Activated CD8-positive, alpha-beta memory T cell treated with anti-CD3 and anti-CD28 coated beads, Interleukin-2, amount 10 ng/mL, durations not matched to agents 7 days and 5 days (primary cell): ENCODE measurements at regions of chr2 and their contacts with region 1.

Region 1: DNA sequence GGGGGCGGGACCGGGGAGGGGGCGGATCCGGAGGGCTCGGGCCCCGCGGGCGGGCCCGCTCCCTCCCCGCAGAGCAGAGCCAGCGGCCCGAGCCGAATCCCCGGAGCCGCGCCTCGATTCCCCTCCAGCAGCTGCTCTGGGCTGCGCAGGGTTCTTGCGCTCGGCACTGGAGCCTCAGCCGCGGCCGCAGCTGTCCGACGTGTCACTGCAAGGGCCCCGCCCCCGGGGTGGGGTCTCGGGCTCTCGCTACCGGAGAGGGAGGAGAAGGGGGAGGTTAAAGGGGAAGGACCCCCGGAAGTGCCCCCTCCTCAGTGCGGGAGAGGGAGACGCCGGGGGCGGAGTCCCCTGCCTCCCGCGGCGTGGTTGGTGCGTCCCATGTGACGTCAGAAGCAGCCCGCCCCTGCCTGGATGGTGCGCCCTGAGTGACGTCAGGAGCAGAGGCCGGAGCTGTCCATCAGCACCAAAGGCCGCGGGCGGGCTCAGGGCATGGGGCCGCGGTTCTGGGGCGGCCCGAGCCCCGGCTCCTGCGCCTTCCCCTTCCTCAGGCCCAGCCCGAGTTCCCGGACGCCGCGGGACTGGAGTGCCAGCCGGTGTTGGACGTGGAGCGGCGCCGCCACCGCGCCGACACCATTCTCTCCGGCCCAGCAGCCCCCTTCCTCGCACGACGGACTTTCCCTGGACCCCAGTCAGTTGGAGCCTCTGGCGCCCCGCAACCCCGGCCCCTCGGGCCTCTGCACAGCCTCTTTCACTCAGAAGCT is at the starts of genes CHPF and TMEM198:
- DNase-seq: peak; percentile 97
- ATAC-seq: peak; percentile 76
- H3K4me3 Mint-ChIP-seq: peak within 1 kb of the TSS; percentile 84
- H3K27ac Mint-ChIP-seq: peak within 1 kb of the TSS; percentile 81
- H3K4me1 Mint-ChIP-seq: peaks cover 20% of the 10 kb centered on the region
- H3K27me3 Mint-ChIP-seq: peaks cover 17% of the 10 kb centered on the region
- total RNA-seq, gene CHPF: 14.2 to 24.4 TPM
- total RNA-seq, gene TMEM198: 1.8 to 2.8 TPM

Region 2: DNA sequence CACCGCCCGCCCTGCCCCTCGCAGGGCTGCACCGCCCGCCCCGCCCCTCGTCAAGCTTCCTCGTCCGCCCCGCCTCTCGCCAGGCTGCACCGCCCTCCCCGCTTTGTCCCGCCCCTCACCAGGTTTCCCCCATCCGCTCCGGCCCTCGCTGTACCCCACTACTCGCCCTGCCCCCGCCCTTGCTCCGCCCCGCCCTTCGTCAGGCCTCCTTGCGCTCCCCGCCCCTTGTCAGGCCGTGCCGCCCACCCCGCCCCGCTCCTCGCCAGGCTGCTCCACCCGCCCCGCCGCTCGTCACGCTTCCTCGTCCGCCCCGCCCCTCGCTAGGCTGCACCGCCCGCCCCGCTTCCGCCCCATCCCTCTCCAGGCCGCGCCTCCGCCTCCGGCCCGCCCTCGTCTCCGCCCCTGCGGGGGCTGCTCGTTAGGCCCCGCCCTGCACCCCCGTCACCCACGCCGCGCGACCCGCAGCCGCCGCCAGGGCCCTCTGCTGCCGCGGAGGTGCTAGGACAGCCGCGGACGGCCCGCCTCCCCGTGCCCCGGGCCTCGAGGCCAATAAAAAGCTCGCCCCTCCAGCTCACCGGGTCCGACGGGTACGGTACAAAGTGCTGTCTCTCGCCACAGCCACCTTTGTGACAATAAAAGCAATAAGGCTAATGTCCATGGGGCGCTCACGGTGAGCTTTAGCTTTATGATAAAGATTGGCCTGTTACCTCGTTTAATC is 155.5 kb before region 1 on chr2:
- CTCF ChIA-PET with region 1: interaction called, 16 read pairs
- DNase-seq: peak; percentile 98
- ATAC-seq: peak; percentile 77
- H3K4me3 Mint-ChIP-seq: peak overlapping the region; percentile 88
- H3K27ac Mint-ChIP-seq: peak overlapping the region; percentile 73
- H3K4me1 Mint-ChIP-seq: peaks cover 13% of the 10 kb centered on the region
- H3K27me3 Mint-ChIP-seq: peaks cover 4% of the 10 kb centered on the region

Region 3: GRCh38 chr2:219486380-219486959 is 57.3 kb before region 1 on chr2:
- CTCF ChIA-PET with region 1: no interaction called
- DNase-seq: no peak
- ATAC-seq: no peak
- H3K4me3 Mint-ChIP-seq: no peak overlapping the region
- H3K27ac Mint-ChIP-seq: no peak overlapping the region
- H3K4me1 Mint-ChIP-seq: no peaks in the 10 kb centered on the region
- H3K27me3 Mint-ChIP-seq: peaks cover 52% of the 10 kb centered on the region

Region 4: GRCh38 chr2:219498280-219499057 is 45.3 kb before region 1 on chr2 and contains the start of gene GMPPA:
- CTCF ChIA-PET with region 1: interaction called, 73 read pairs
- DNase-seq: peak; percentile 98
- ATAC-seq: peak; percentile 94
- H3K4me3 Mint-ChIP-seq: peak within 1 kb of the TSS; percentile 87
- H3K27ac Mint-ChIP-seq: peak within 1 kb of the TSS; percentile 78
- H3K4me1 Mint-ChIP-seq: peaks cover 31% of the 10 kb centered on the region
- H3K27me3 Mint-ChIP-seq: peaks cover 40% of the 10 kb centered on the region
- total RNA-seq, gene GMPPA: 36.5 to 42.6 TPM

Region 5: DNA sequence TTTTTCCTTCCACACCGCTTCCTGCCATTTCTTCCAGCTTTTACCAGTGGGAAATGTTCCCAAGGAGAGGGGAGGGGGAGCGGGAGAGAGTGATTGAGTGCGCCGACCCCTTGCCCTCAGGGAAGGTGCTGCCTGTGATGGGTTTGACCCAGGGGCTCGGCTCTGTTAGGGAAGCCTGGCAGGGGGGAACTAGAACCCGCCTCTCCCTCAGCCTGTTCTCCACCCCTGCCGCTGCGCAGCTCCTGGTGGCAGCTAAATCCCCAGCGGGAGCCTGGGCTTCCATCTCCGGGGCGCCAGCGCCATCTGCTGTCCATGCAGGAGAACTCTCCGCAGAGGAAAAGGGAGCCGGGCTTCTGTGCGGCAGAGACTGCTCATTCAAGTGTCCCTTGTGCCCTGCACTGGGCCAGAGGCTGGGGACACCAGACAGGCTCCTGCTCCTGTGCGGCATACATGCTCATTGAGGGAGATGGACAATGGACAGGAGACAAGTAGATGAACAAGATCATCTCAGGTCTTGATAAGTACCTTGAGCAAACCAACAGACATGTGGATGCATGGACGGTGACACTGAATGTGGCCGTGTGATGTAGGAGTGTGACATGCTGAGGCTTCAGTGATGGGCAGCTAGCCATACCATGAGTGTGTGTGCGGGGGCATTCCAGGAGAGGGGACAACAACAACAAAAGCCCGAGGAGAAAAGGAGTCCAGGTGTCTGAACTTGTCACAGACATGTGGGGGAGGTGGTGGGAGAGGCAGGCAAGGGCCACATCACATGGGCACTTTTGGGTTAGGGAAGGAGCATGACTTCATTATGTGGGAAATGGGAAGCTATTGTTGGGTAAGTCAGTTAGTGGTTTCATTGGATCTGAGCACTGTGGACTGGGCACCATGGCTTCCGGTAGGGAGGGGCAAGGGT is 13.5 kb before region 1 on chr2:
- CTCF ChIA-PET with region 1: interaction called, 85 read pairs
- DNase-seq: peak; percentile 86
- ATAC-seq: peak; percentile 91
- H3K4me3 Mint-ChIP-seq: no peak overlapping the region
- H3K27ac Mint-ChIP-seq: no peak overlapping the region
- H3K4me1 Mint-ChIP-seq: no peaks in the 10 kb centered on the region
- H3K27me3 Mint-ChIP-seq: peaks cover 46% of the 10 kb centered on the region

Region 6: DNA sequence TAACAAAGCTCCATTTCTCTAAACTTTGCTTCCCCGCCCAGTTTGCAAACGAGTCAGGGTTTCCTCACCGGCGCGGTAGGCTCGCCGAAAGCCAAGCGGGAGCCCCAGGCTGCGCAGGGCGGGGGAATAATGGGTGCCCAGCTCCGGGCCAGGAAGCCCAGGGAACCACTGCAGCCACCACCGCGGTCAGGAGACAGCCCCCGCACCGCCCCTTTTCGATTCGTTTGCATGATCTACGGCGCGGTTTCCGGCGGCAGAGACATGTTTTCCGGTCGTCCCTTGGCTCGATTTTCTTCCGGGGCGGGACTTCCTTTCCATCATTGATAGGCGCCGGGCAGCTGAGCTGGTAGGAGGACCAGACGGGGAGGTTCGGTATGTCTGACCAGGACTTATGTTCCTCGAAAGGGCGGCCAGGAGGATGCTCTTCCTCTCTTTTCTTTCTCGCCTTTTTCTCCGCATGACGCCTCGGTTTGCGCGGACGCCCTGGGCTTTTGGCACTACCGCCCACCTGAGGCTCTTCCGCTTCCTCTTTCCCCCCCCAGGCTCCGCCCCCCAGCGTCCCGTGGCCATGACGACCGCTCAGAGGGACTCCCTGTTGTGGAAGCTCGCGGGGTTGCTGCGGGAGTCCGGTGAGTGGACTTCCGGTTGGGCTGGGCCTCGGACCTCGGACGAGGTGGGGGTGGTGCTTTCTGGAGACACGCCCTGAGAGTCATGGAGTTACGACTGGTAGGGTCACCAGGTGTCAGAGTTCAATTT is 54.0 kb after region 1 on chr2 and contains the start of gene STK11IP:
- CTCF ChIA-PET with region 1: interaction called, 37 read pairs
- DNase-seq: peak; percentile 96
- ATAC-seq: peak; percentile 91
- H3K4me3 Mint-ChIP-seq: peak within 1 kb of the TSS; percentile 94
- H3K27ac Mint-ChIP-seq: peak within 1 kb of the TSS; percentile 93
- H3K4me1 Mint-ChIP-seq: peaks cover 16% of the 10 kb centered on the region
- H3K27me3 Mint-ChIP-seq: peaks cover 3% of the 10 kb centered on the region
- total RNA-seq, gene STK11IP: 27.7 to 30.8 TPM

Region 7: GRCh38 chr2:219689676-219690628 is 146.2 kb after region 1 on chr2:
- CTCF ChIA-PET with region 1: interaction called, 23 read pairs
- DNase-seq: peak; percentile 55
- ATAC-seq: peak; percentile 41
- H3K4me3 Mint-ChIP-seq: no peak overlapping the region
- H3K27ac Mint-ChIP-seq: no peak overlapping the region
- H3K4me1 Mint-ChIP-seq: peaks cover 4% of the 10 kb centered on the region
- H3K27me3 Mint-ChIP-seq: peaks cover 30% of the 10 kb centered on the region